ENCODE measurements at regions of chr11 and their contacts with region 1.

Region 1: GRCh38 chr11:118791111-118791965 is at the start of gene DDX6:
- DNase-seq: peak; percentile 84 to 95 (median 90)
- ATAC-seq: peak; percentile 69 to 76 (median 72)
- H3K4me3 ChIP-seq: peak within 1 kb of the TSS; percentile 97 to 99
- H3K4me3 Mint-ChIP-seq: peak within 1 kb of the TSS; percentile 97 to 99 (median 98)
- H3K27ac ChIP-seq: peak within 1 kb of the TSS; percentile 99
- H3K27ac Mint-ChIP-seq: peak within 1 kb of the TSS; percentile 98 to 99
- H3K4me1 ChIP-seq: peaks cover 17 to 35% of the 10 kb centered on the region in 2 experiments
- H3K4me1 Mint-ChIP-seq: peaks cover 23 to 40% (median 34%) of the 10 kb centered on the region in 3 donors
- H3K27me3 ChIP-seq: no peaks in the 10 kb centered on the region
- H3K27me3 Mint-ChIP-seq: no peaks in the 10 kb centered on the region
- total RNA-seq, gene DDX6: 220 to 312 (median 244) TPM

Region 2: GRCh38 chr11:118287006-118287405 is 504.3 kb before region 1 on chr11:
- CTCF ChIA-PET with region 1: no interaction called
- POLR2A ChIA-PET with region 1: no interaction called
- DNase-seq: no peak
- ATAC-seq: peak in 1 of 4 experiments; percentile 35
- H3K4me3 ChIP-seq: no peak overlapping the region
- H3K4me3 Mint-ChIP-seq: no peak overlapping the region
- H3K27ac ChIP-seq: no peak overlapping the region
- H3K27ac Mint-ChIP-seq: no peak overlapping the region
- H3K4me1 ChIP-seq: peaks cover 0 to 8% of the 10 kb centered on the region in 2 experiments
- H3K4me1 Mint-ChIP-seq: peaks cover 9 to 33% (median 31%) of the 10 kb centered on the region in 3 donors
- H3K27me3 ChIP-seq: no peaks in the 10 kb centered on the region
- H3K27me3 Mint-ChIP-seq: no peaks in the 10 kb centered on the region

Region 3: GRCh38 chr11:118605116-118605867 is 186.0 kb before region 1 on chr11:
- CTCF ChIA-PET with region 1: no interaction called
- POLR2A ChIA-PET with region 1: interaction called in 1 of 2 experiments, 11 read pairs
- DNase-seq: no peak
- ATAC-seq: no peak
- H3K4me3 ChIP-seq: no peak overlapping the region
- H3K4me3 Mint-ChIP-seq: no peak overlapping the region
- H3K27ac ChIP-seq: no peak overlapping the region
- H3K27ac Mint-ChIP-seq: peak overlapping the region in 1 of 2 donors; percentile 22
- H3K4me1 ChIP-seq: peaks cover 12 to 29% of the 10 kb centered on the region in 2 experiments
- H3K4me1 Mint-ChIP-seq: peaks cover 16 to 25% (median 20%) of the 10 kb centered on the region in 3 donors
- H3K27me3 ChIP-seq: peaks cover 0 to 18% of the 10 kb centered on the region in 2 experiments
- H3K27me3 Mint-ChIP-seq: peaks cover 0 to 10% of the 10 kb centered on the region in 2 donors

Region 4: GRCh38 chr11:118744046-118744445 is 47.3 kb before region 1 on chr11:
- CTCF ChIA-PET with region 1: no interaction called
- POLR2A ChIA-PET with region 1: interaction called in 1 of 2 experiments, 10 read pairs
- DNase-seq: no peak
- ATAC-seq: peak in 1 of 4 experiments; percentile 2
- H3K4me3 ChIP-seq: no peak overlapping the region
- H3K4me3 Mint-ChIP-seq: no peak overlapping the region
- H3K27ac ChIP-seq: no peak overlapping the region
- H3K27ac Mint-ChIP-seq: peak overlapping the region in 1 of 2 donors; percentile 8
- H3K4me1 ChIP-seq: no peaks in the 10 kb centered on the region
- H3K4me1 Mint-ChIP-seq: peaks cover 0 to 8% (median 2%) of the 10 kb centered on the region in 3 donors
- H3K27me3 ChIP-seq: no peaks in the 10 kb centered on the region
- H3K27me3 Mint-ChIP-seq: no peaks in the 10 kb centered on the region

Region 5: GRCh38 chr11:118778898-118779297 is 12.4 kb before region 1 on chr11:
- CTCF ChIA-PET with region 1: interaction called in 1 of 2 experiments, 4 read pairs
- POLR2A ChIA-PET with region 1: interaction called, 6 to 12 read pairs
- DNase-seq: no peak
- ATAC-seq: no peak
- H3K4me3 ChIP-seq: no peak overlapping the region
- H3K4me3 Mint-ChIP-seq: no peak overlapping the region
- H3K27ac ChIP-seq: no peak overlapping the region
- H3K27ac Mint-ChIP-seq: no peak overlapping the region
- H3K4me1 ChIP-seq: peaks cover 25 to 49% of the 10 kb centered on the region in 2 experiments
- H3K4me1 Mint-ChIP-seq: peaks cover 63 to 86% (median 79%) of the 10 kb centered on the region in 3 donors
- H3K27me3 ChIP-seq: no peaks in the 10 kb centered on the region
- H3K27me3 Mint-ChIP-seq: no peaks in the 10 kb centered on the region

Region 6: GRCh38 chr11:118878163-118878563 is 86.8 kb after region 1 on chr11:
- CTCF ChIA-PET with region 1: interaction called, 6 to 15 read pairs
- POLR2A ChIA-PET with region 1: interaction called, 17 to 28 read pairs
- DNase-seq: peak in 11 of 35 experiments; percentile 20 to 65 (median 32)
- ATAC-seq: peak; percentile 6 to 30 (median 21)
- H3K4me3 ChIP-seq: no peak overlapping the region
- H3K4me3 Mint-ChIP-seq: peak overlapping the region in 1 of 3 donors; percentile 79
- H3K27ac ChIP-seq: peak overlapping the region; percentile 88
- H3K27ac Mint-ChIP-seq: peak overlapping the region; percentile 97 to 98
- H3K4me1 ChIP-seq: peaks cover 58 to 96% of the 10 kb centered on the region in 2 experiments
- H3K4me1 Mint-ChIP-seq: peaks cover 91 to 96% (median 94%) of the 10 kb centered on the region in 3 donors
- H3K27me3 ChIP-seq: no peaks in the 10 kb centered on the region
- H3K27me3 Mint-ChIP-seq: no peaks in the 10 kb centered on the region